ENCODE measurements at regions of chr5 and their contacts with region 1.

Region 1: DNA sequence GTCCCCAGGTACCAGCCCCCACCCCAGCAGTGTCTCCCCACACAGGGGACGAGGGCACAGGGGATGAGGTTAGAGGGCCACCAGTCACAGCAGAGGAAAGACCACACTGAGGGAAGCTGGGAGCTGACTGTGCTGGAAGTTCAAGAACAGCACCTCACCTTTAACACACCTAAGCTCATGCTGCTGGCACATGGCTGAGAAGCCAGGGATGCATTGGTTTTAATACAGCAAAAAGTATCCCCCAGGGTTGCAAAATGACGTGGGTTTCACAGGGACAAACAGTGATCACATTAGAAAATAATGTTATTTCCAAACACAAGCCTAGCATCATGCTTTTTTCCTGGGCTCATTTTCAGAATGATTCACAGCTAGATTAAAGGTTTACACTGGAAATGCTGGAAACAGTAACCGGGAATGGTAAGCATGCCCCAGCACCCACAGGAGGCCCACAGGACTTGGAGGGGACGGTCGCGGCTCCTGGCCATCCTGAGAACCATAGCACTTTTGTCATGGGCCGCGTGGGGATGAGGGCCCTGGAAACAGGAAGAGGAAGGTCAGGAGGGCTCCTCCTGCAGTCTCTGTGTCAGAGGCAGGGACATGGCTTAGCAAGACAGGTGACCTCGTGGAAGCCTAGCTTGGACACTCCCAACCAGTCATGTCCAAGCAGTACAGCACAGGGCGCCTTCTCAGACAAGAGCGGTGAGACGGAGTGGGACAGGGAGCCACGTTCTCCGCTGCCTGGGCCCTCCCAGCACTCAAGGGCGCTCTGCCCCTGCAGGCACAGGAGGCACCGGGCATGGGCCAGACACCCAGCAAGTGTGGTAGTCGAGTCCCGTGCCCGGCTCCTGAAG is 6.8 kb downstream of the LPCAT1 start:
- DNase-seq: no peak
- ATAC-seq: no peak
- H3K4me3 ChIP-seq: no peak overlapping the region
- H3K27ac ChIP-seq: peak overlapping the region; percentile 19; the same call in 1 of the 2 replicates
- H3K4me1 ChIP-seq: peaks cover 20% of the 10 kb centered on the region
- H3K27me3 ChIP-seq: no peaks in the 10 kb centered on the region
- CTCF ChIP-seq: no peak

Region 2: DNA sequence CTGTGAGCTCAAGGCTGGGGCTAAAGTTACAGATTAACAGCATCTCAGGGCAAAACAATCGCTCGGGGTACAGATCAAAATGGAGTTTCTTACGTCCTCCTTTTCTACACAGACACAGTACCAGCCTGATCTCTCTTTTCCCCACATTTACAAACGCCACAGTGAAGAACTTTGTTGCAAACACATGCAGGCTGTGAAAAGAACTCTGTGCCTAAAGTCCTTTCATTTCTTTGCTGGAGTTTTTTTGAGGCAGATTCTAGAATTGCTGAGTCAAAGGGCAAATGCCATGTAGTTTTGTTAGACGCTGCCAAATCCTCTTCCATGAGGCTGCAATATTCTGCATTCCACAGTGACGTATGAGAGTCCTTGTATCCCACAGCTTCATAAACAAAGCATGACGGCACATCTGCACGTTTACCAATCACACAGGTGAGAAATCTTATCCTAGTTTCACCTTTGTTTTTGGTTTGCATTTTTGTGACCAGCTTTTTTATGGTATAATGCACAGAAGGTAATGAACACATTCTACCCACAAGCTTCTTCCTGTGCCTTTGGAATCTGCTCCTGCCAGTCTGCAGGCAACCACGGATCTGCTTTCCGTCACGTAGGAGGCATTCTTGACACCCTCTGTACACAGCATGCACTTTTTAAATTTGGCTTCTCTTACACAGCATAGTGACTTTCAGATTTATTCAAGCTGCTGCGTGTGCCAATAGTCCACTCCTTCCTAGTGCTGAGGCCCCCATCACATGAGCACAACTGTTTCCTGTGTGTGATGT is 51.4 kb after region 1 on chr5:
- CTCF ChIA-PET with region 1: interaction called, 13 read pairs
- POLR2A ChIA-PET with region 1: no interaction called
- in situ Hi-C with region 1: no loop called
- intact Hi-C with region 1: no loop called
- DNase-seq: no peak
- ATAC-seq: no peak
- H3K4me3 ChIP-seq: no peak overlapping the region
- H3K27ac ChIP-seq: no peak overlapping the region
- H3K4me1 ChIP-seq: peaks cover 3% of the 10 kb centered on the region; the same call in 1 of the 2 replicates
- H3K27me3 ChIP-seq: no peaks in the 10 kb centered on the region
- CTCF ChIP-seq: no peak

Measured in Panc1 (cell line).